ENCODE measurements at regions of chr17 and their contacts with region 1.

Region 1: DNA sequence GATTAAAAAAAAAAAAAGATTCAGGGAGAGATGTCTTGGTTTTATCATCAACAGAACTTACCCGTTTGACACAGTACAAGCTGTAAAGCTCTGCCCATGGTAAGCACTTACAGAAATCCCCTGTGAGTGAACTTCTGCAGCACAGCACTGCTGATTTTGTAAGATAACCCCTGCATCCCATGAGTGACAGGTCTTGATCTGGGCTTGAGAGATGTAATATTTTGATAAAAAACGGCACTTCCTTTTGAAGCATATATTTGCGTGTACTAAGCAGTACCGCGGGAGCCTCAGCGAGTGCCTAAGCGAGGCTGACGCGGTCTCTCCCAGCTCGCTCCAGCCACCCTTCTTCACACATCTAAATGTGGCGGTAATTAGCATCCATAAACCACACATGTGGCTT is 50.5 kb downstream of the IKZF3 start:
- DNase-seq: peak; percentile 49 to 82 (median 79)
- H3K4me3 ChIP-seq: peak overlapping the region; percentile 13
- H3K4me3 Mint-ChIP-seq: peak overlapping the region; percentile 57 to 85 (median 79)
- H3K27ac ChIP-seq: peak overlapping the region; percentile 5
- H3K27ac Mint-ChIP-seq: peak overlapping the region; percentile 81 to 97 (median 90)
- H3K4me1 ChIP-seq: peaks cover 76% of the 10 kb centered on the region
- H3K4me1 Mint-ChIP-seq: peaks cover 67 to 93% (median 86%) of the 10 kb centered on the region in 3 donors
- H3K27me3 ChIP-seq: no peaks in the 10 kb centered on the region
- H3K27me3 Mint-ChIP-seq: no peaks in the 10 kb centered on the region

Region 2: DNA sequence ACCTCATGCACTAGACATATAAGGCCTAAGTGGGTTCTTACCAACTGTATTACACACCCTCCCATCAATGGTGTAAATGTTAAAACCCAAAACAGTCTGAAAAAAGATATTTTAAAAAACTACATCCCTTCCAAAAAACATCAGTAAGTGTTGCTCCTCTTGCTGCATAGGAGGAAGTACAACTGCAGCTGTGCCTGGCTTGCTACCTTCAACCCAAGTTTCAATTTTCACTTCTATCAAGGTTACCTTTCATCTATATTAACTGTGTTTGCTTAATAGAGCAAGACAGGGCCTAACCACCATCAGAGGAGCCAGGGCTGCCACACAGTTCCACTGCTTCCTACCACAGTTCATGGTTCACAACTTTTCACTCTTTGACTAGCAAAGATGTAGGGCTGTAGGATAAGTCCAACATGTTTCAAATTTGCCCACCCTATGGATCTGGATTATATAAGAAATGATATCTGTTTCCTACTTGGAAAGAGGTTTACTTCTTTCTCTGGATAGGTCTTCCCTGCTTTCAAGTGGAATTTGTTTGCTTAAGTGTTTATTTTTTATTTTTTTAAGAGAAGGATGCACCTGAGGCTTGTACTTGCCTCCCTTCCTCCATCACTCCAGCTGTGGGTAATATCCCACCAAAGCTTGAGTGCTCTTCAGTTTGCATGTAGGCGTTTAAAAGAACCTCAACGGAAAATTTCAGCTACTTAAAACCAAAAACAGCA is 19.2 kb before region 1 on chr17:
- CTCF ChIA-PET with region 1: interaction called, 8 read pairs
- POLR2A ChIA-PET with region 1: interaction called, 24 read pairs
- DNase-seq: peak in 3 of 5 donors; percentile 45 to 57 (median 48)
- H3K4me3 ChIP-seq: peak overlapping the region; percentile 17
- H3K4me3 Mint-ChIP-seq: peak overlapping the region; percentile 22 to 82 (median 74)
- H3K27ac ChIP-seq: no peak overlapping the region
- H3K27ac Mint-ChIP-seq: peak overlapping the region; percentile 81 to 97 (median 92)
- H3K4me1 ChIP-seq: peaks cover 71% of the 10 kb centered on the region
- H3K4me1 Mint-ChIP-seq: peaks cover 67 to 85% (median 84%) of the 10 kb centered on the region in 3 donors
- H3K27me3 ChIP-seq: no peaks in the 10 kb centered on the region
- H3K27me3 Mint-ChIP-seq: no peaks in the 10 kb centered on the region

Measured in CD8-positive, alpha-beta memory T cell (primary cell).